ENCODE measurements at regions of chr22 and their contacts with region 1.

Region 1: DNA sequence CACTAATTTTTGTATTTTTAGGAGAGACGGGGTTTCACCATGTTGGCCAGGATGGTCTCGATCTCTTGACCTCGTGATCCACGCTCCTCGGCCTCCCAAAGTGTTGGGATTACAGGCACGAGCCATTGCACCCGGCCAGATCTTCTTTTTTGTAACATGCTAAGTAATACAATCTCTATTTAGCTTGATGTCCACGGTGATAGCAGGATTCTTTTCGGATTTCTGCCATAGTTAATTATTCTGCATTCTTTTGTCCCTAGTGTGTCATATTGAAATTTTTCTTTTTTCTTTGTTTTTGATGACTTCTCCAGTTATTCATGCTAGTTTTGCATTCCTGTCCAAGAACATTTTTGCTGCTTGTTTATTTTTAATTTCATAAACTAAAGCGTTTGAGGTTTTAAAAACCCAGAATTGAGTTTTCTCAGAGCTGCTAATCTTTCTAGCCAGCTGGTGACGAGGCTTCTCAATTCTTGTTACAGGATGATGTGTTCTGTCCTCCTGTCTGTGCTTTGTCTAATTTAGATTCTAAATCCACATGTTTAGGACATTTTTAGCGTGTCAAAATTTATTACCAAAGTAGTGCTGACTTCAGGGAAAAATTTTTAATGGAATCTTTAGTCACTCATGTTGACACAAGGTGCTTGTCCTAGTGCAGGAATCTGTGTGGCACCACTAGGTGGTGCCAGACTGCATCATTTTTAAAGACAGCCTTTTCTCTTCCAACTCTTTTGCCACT is 21.8 kb downstream of the NF2 start:
- DNase-seq: no peak
- H3K4me3 ChIP-seq: no peak overlapping the region
- H3K27ac ChIP-seq: no peak overlapping the region
- H3K4me1 ChIP-seq: peaks cover 0 to 6% (median 3%) of the 10 kb centered on the region in 4 experiments; a peak in 3 of 7 replicates
- H3K27me3 ChIP-seq: no peaks in the 10 kb centered on the region
- CTCF ChIP-seq: peak in 2 of 3 experiments; percentile 79 to 81; a peak in 3 of 4 replicates
- EP300 ChIP-seq: no peak
- POLR2A ChIP-seq: no peak
- RAD21 ChIP-seq: peak; percentile 41 to 64

Region 2: GRCh38 chr22:29524440-29525191 is 100.6 kb before region 1 on chr22:
- CTCF ChIA-PET with region 1: no interaction called
- POLR2A ChIA-PET with region 1: no interaction called
- DNase-seq: peak; percentile 33 to 56
- H3K4me3 ChIP-seq: no peak overlapping the region
- H3K27ac ChIP-seq: no peak overlapping the region
- H3K4me1 ChIP-seq: no peaks in the 10 kb centered on the region
- H3K27me3 ChIP-seq: no peaks in the 10 kb centered on the region
- CTCF ChIP-seq: peak; percentile 52 to 71 (median 55)
- EP300 ChIP-seq: no peak
- POLR2A ChIP-seq: no peak
- RAD21 ChIP-seq: peak; percentile 71 to 80

Region 3: GRCh38 chr22:29587938-29588699 is 37.1 kb before region 1 on chr22:
- CTCF ChIA-PET with region 1: interaction called, 17 read pairs
- POLR2A ChIA-PET with region 1: no interaction called
- DNase-seq: no peak
- H3K4me3 ChIP-seq: no peak overlapping the region
- H3K27ac ChIP-seq: no peak overlapping the region
- H3K4me1 ChIP-seq: no peaks in the 10 kb centered on the region
- H3K27me3 ChIP-seq: no peaks in the 10 kb centered on the region
- CTCF ChIP-seq: no peak
- EP300 ChIP-seq: no peak
- POLR2A ChIP-seq: no peak
- RAD21 ChIP-seq: no peak

Region 4: GRCh38 chr22:29593923-29594322 is 31.3 kb before region 1 on chr22:
- CTCF ChIA-PET with region 1: interaction called, 17 read pairs
- POLR2A ChIA-PET with region 1: no interaction called
- DNase-seq: no peak
- H3K4me3 ChIP-seq: no peak overlapping the region
- H3K27ac ChIP-seq: no peak overlapping the region
- H3K4me1 ChIP-seq: no peaks in the 10 kb centered on the region
- H3K27me3 ChIP-seq: no peaks in the 10 kb centered on the region
- CTCF ChIP-seq: no peak
- EP300 ChIP-seq: no peak
- POLR2A ChIP-seq: no peak
- RAD21 ChIP-seq: no peak

Region 5: DNA sequence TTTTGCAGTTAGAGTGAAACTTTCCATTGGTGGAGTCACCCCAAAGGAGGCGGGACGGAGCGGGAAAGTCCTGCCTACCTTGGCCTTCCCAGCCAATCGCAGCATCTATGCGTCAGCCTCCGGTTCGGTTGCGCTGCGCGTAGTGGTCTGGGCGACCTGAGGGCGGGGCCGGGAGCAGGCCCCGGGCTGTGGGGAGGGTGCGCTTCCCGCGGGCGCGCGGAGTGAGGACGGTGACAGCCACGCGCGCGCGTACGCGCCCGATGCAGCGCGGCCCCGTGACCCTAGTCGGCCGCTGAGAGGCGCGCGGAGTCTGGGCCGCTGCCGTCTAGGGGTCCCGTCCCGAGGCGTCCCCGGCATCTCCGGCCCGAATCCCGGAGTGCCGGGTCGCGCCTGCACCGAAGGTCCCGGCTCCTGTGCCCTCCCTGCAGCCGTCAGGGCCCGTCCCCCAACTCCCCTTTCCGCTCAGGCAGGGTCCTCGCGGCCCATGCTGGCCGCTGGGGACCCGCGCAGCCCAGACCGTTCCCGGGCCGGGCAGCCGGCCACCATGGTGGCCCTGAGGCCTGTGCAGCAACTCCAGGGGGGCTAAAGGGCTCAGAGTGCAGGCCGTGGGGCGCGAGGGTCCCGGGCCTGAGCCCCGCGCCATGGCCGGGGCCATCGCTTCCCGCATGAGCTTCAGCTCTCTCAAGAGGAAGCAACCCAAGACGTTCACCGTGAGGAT is 21.7 kb before region 1 on chr22 and contains the start of gene NF2:
- CTCF ChIA-PET with region 1: interaction called, 39 read pairs
- POLR2A ChIA-PET with region 1: no interaction called
- DNase-seq: peak; percentile 95 to 99
- H3K4me3 ChIP-seq: peak within 1 kb of the TSS; percentile 79 to 94 (median 82)
- H3K27ac ChIP-seq: peak within 1 kb of the TSS; percentile 13; the same call in 1 of the 2 replicates
- H3K4me1 ChIP-seq: peaks cover 3 to 10% (median 4%) of the 10 kb centered on the region in 4 experiments; a peak in 5 of 7 replicates
- H3K27me3 ChIP-seq: no peaks in the 10 kb centered on the region
- CTCF ChIP-seq: no peak
- EP300 ChIP-seq: no peak
- POLR2A ChIP-seq: peak in 1 of 2 experiments; percentile 65; a peak in 1 of 3 replicates
- RAD21 ChIP-seq: no peak
- total RNA-seq, gene NF2: 53.6 and 54.9 TPM in 2 replicates

Region 6: GRCh38 chr22:29635734-29636357 is 10.6 kb after region 1 on chr22:
- CTCF ChIA-PET with region 1: interaction called, 36 read pairs
- POLR2A ChIA-PET with region 1: interaction called, 3 read pairs
- DNase-seq: no peak
- H3K4me3 ChIP-seq: no peak overlapping the region
- H3K27ac ChIP-seq: no peak overlapping the region
- H3K4me1 ChIP-seq: no peaks in the 10 kb centered on the region
- H3K27me3 ChIP-seq: no peaks in the 10 kb centered on the region
- CTCF ChIP-seq: peak; percentile 23 to 81 (median 71)
- EP300 ChIP-seq: no peak
- POLR2A ChIP-seq: no peak
- RAD21 ChIP-seq: peak; percentile 88 to 91

Region 7: DNA sequence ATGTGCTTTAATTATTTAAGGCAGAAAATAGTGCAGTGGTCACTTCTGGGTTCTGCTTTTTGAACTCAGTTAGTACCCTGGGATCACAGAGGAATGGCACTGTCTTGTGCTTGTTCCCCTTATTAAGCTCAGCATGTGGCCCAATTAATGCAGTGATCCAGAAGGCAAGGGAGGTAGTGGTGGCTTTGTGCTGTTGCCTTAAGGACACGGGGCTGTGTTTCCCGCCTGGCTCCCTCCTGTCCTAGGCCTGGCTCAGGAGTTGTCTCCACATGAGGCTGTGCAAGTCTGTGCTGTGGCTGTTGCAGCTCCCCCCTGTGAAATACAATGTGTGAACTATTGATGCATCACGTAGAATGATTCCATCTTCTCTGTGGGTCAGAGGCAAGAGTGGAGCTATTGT is 45.4 kb after region 1 on chr22:
- CTCF ChIA-PET with region 1: interaction called, 13 read pairs
- POLR2A ChIA-PET with region 1: no interaction called
- DNase-seq: no peak
- H3K4me3 ChIP-seq: no peak overlapping the region
- H3K27ac ChIP-seq: no peak overlapping the region
- H3K4me1 ChIP-seq: peaks cover 0 to 2% (median 0%) of the 10 kb centered on the region in 4 experiments; a peak in 1 of 7 replicates
- H3K27me3 ChIP-seq: no peaks in the 10 kb centered on the region
- CTCF ChIP-seq: no peak
- EP300 ChIP-seq: no peak
- POLR2A ChIP-seq: no peak
- RAD21 ChIP-seq: no peak

Region 8: GRCh38 chr22:29689880-29690213 is 64.6 kb after region 1 on chr22:
- CTCF ChIA-PET with region 1: interaction called, 28 read pairs
- POLR2A ChIA-PET with region 1: no interaction called
- DNase-seq: peak; percentile 41 to 86
- H3K4me3 ChIP-seq: no peak overlapping the region
- H3K27ac ChIP-seq: no peak overlapping the region
- H3K4me1 ChIP-seq: peaks cover 12 to 41% (median 28%) of the 10 kb centered on the region in 4 experiments
- H3K27me3 ChIP-seq: no peaks in the 10 kb centered on the region
- CTCF ChIP-seq: peak; percentile 78 to 89 (median 89)
- EP300 ChIP-seq: no peak
- POLR2A ChIP-seq: no peak
- RAD21 ChIP-seq: peak; percentile 73 to 81